CD14-positive monocyte (primary cell): ENCODE measurements at regions of chr9 and their contacts with region 1.

Region 1: GRCh38 chr9:137200311-137201204 is at the start of gene TPRN:
- DNase-seq: peak; percentile 98 to 100 (median 99)
- H3K4me3 ChIP-seq: peak within 1 kb of the TSS; percentile 47 to 74 (median 68)
- H3K4me3 Mint-ChIP-seq: peak within 1 kb of the TSS; percentile 81 to 88
- H3K27ac ChIP-seq: peak within 1 kb of the TSS; percentile 77 to 89
- H3K27ac Mint-ChIP-seq: peak within 1 kb of the TSS; percentile 77 to 92 (median 89)
- H3K4me1 ChIP-seq: peaks cover 41 to 55% of the 10 kb centered on the region in 2 donors
- H3K4me1 Mint-ChIP-seq: peaks cover 43% of the 10 kb centered on the region
- H3K27me3 ChIP-seq: peaks cover 0 to 4% of the 10 kb centered on the region in 2 donors
- H3K27me3 Mint-ChIP-seq: peaks cover 0 to 4% (median 0%) of the 10 kb centered on the region in 3 donors
- CTCF ChIP-seq: no peak
- polyA plus RNA-seq, gene TPRN: 0.30 to 4.6 (median 0.46) TPM

Region 2: GRCh38 chr9:137188490-137189296 is 11.9 kb before region 1 on chr9 and contains the starts of genes ANAPC2 and SSNA1:
- intact Hi-C with region 1: loop called (anchors 1 to 2 kb)
- DNase-seq: peak; percentile 94 to 97 (median 95)
- H3K4me3 ChIP-seq: peak within 1 kb of the TSS; percentile 83 to 95 (median 92)
- H3K4me3 Mint-ChIP-seq: peak within 1 kb of the TSS; percentile 88 to 97
- H3K27ac ChIP-seq: peak within 1 kb of the TSS; percentile 83 to 96
- H3K27ac Mint-ChIP-seq: peak within 1 kb of the TSS; percentile 93 to 98 (median 96)
- H3K4me1 ChIP-seq: peaks cover 28 to 39% of the 10 kb centered on the region in 2 donors
- H3K4me1 Mint-ChIP-seq: peaks cover 32% of the 10 kb centered on the region
- H3K27me3 ChIP-seq: no peaks in the 10 kb centered on the region
- H3K27me3 Mint-ChIP-seq: no peaks in the 10 kb centered on the region
- CTCF ChIP-seq: peak; percentile 42
- polyA plus RNA-seq, gene ANAPC2: 1.9 to 76.8 (median 2.0) TPM
- polyA plus RNA-seq, gene SSNA1: 87.0 to 118 (median 98.3) TPM

Region 3: DNA sequence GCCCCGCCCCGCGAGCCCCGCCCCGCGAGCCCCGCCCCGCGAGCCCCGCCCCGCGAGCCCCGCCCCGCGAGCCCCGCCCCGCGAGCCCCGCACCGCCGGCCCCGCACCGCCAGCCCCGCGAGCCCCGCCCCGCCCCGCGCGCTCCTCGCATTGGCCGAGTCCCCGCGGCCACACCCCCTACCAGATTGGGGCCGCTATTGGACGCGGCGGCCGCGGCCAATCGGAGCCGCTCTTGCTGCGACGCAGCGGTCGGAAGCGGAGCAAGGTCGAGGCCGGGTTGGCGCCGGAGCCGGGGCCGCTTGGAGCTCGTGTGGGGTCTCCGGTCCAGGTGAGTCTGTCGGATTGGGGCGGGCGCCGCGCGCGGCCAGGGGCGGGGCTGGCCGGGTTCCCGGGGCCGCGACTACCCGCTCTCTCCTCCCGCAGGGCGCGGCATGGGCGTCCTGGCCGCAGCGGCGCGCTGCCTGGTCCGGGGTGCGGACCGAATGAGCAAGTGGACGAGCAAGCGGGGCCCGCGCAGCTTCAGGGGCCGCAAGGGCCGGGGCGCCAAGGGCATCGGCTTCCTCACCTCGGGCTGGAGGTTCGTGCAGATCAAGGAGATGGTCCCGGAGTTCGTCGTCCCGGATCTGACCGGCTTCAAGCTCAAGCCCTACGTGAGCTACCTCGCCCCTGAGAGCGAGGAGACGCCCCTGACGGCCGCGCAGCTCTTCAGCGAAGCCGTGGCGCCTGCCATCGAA is 351.3 kb after region 1 on chr9 and contains the start of gene MRPL41:
- intact Hi-C with region 1: loop called in 1 of 2 experiments (anchors 5 kb)
- DNase-seq: peak; percentile 79 to 90 (median 86)
- H3K4me3 ChIP-seq: peak within 1 kb of the TSS; percentile 50 to 91 (median 74)
- H3K4me3 Mint-ChIP-seq: peak within 1 kb of the TSS; percentile 77 to 78
- H3K27ac ChIP-seq: peak within 1 kb of the TSS in 1 of 2 donors; percentile 55
- H3K27ac Mint-ChIP-seq: peak within 1 kb of the TSS in 4 of 7 donors; percentile 20 to 79 (median 72)
- H3K4me1 ChIP-seq: peaks cover 16 to 24% of the 10 kb centered on the region in 2 donors
- H3K4me1 Mint-ChIP-seq: peaks cover 13% of the 10 kb centered on the region
- H3K27me3 ChIP-seq: no peaks in the 10 kb centered on the region
- H3K27me3 Mint-ChIP-seq: no peaks in the 10 kb centered on the region
- CTCF ChIP-seq: no peak
- polyA plus RNA-seq, gene MRPL41: 17.3 to 49.4 (median 33.2) TPM